ENCODE measurements at regions of chr9 and their contacts with region 1.

Region 1: GRCh38 chr9:129495534-129496325 is 125.2 kb downstream of the C9orf50 start:
- DNase-seq: peak; percentile 95 to 98 (median 96)
- H3K4me3 ChIP-seq: peak overlapping the region; percentile 55
- H3K27ac ChIP-seq: peak overlapping the region; percentile 96 to 98
- H3K4me1 ChIP-seq: peaks cover 25% of the 10 kb centered on the region
- H3K27me3 ChIP-seq: no peaks in the 10 kb centered on the region
- CTCF ChIP-seq: no peak
- EP300 ChIP-seq: peak; percentile 49
- POLR2A ChIP-seq: peak; percentile 16

Region 2: GRCh38 chr9:129458663-129459555 is 36.8 kb before region 1 on chr9:
- intact Hi-C with region 1: no loop called
- DNase-seq: peak; percentile 60 to 78 (median 74)
- H3K4me3 ChIP-seq: no peak overlapping the region
- H3K27ac ChIP-seq: peak overlapping the region; percentile 78 to 87
- H3K4me1 ChIP-seq: peaks cover 20% of the 10 kb centered on the region
- H3K27me3 ChIP-seq: no peaks in the 10 kb centered on the region
- CTCF ChIP-seq: no peak
- EP300 ChIP-seq: no peak
- POLR2A ChIP-seq: no peak

Region 3: DNA sequence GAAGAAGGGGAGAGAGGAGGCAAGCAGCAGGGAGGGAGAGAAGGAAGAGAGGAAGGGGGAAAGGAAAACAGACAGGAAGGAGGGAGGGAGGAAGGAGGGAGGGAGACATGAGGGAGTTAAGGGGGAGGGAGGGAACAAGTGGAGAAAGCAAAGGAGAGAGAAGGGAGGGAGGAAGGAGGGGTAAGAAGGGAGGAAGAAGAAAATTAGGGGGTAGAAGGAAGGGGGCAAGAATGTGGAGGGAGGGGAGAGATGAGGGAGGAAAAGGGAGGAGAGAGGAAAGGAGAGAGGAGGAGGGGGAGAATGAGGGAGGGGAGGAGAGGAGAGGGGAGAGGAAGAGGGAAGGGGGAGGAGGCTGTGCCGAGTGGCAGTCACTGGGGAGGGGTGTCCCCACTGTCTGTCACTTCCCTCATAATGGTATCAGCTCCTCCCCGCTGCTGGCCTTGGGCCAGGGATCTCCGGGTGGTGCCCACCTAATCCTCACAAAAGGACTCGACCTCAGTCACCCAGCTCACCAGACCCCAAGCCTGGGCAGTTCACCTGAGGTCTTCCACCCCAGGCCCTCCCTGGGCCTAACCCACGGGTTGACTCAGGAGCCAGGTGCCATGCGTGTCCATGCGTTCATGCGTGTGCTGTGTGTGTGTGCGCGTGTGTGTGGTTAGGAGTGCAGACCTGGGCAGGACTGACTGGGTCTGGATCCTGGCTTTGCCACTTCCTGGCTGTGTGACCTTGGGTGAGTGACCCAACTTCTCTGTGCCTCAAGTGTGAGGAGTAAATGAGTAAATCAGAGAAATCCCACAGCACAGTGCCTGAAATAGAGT is 107.1 kb after region 1 on chr9:
- intact Hi-C with region 1: loop called in 3 of 4 experiments (anchors 5 to 10 kb)
- DNase-seq: peak in 2 of 5 donors; percentile 61 to 65
- H3K4me3 ChIP-seq: no peak overlapping the region
- H3K27ac ChIP-seq: no peak overlapping the region
- H3K4me1 ChIP-seq: peaks cover 8% of the 10 kb centered on the region
- H3K27me3 ChIP-seq: no peaks in the 10 kb centered on the region
- CTCF ChIP-seq: no peak
- EP300 ChIP-seq: no peak
- POLR2A ChIP-seq: no peak

Region 4: GRCh38 chr9:129868916-129869486 is 373.3 kb after region 1 on chr9:
- intact Hi-C with region 1: no loop called
- DNase-seq: no peak
- H3K4me3 ChIP-seq: no peak overlapping the region
- H3K27ac ChIP-seq: no peak overlapping the region
- H3K4me1 ChIP-seq: no peaks in the 10 kb centered on the region
- H3K27me3 ChIP-seq: no peaks in the 10 kb centered on the region
- CTCF ChIP-seq: no peak
- EP300 ChIP-seq: no peak
- POLR2A ChIP-seq: no peak